Endothelial cell of umbilical vein (primary cell): ENCODE measurements at regions of chr7 and their contacts with region 1.

Region 1: GRCh38 chr7:129574487-129574886 is 37.0 kb upstream of the NRF1 start:
- DNase-seq: peak; percentile 69
- H3K4me3 ChIP-seq: no peak overlapping the region
- H3K27ac ChIP-seq: peak overlapping the region; percentile 31
- H3K4me1 ChIP-seq: peaks cover 8% of the 10 kb centered on the region
- H3K27me3 ChIP-seq: no peaks in the 10 kb centered on the region
- CTCF ChIP-seq: no peak
- POLR2A ChIP-seq: no peak

Region 2: GRCh38 chr7:129591868-129592267 is 17.4 kb after region 1 on chr7:
- CTCF ChIA-PET with region 1: interaction called, 4 read pairs
- POLR2A ChIA-PET with region 1: no interaction called
- dilution Hi-C with region 1: no loop called
- intact Hi-C with region 1: loop called (anchors 2 kb)
- DNase-seq: no peak
- H3K4me3 ChIP-seq: no peak overlapping the region
- H3K27ac ChIP-seq: no peak overlapping the region
- H3K4me1 ChIP-seq: no peaks in the 10 kb centered on the region
- H3K27me3 ChIP-seq: peaks cover 1 to 2% of the 10 kb centered on the region in 2 experiments
- CTCF ChIP-seq: no peak
- POLR2A ChIP-seq: no peak